ENCODE measurements at regions of chr10 and their contacts with region 1.

Region 1: DNA sequence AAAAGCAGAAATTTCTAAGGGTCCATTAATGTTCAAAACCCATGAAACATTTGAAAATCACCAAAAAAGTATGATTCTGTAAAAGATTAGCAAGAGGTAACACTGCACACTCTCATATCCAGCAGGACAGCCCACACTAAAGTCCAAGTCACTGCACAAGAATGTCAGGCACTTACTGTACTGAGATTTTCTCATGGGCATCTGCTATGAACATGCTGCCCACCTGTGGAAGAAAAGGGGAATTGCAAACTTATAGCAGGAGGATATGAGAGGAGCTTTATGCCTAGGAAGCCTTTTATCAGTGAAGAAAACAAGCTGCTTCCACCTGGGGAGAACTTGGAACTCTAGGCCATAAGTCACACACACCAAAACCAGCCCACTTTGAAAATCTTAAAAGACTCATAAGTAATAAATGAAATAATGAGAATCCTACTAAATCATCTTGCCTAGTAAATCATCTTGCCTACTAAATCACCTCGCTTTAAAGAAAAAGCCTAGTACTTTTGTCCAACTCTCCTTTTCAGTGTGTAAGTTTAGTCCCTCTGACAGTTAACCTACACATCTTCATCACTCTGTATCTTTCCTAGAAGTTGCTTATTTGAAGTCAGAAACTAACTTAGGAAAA is 46.1 kb downstream of the ARMH3 start:
- DNase-seq: no peak
- ATAC-seq: peak; percentile 97 to 99 (median 98)
- H3K4me3 ChIP-seq: no peak overlapping the region
- H3K27ac ChIP-seq: no peak overlapping the region
- H3K4me1 ChIP-seq: peaks cover 5% of the 10 kb centered on the region
- H3K27me3 ChIP-seq: no peaks in the 10 kb centered on the region
- CTCF ChIP-seq: peak; percentile 91

Region 2: GRCh38 chr10:101840741-101841453 is 169.0 kb before region 1 on chr10:
- intact Hi-C with region 1: loop called (anchors 2 to 5 kb)
- DNase-seq: peak; percentile 81 to 87
- ATAC-seq: peak; percentile 86 to 92 (median 87)
- H3K4me3 ChIP-seq: peak overlapping the region; percentile 53
- H3K27ac ChIP-seq: no peak overlapping the region
- H3K4me1 ChIP-seq: peaks cover 24% of the 10 kb centered on the region
- H3K27me3 ChIP-seq: no peaks in the 10 kb centered on the region
- CTCF ChIP-seq: peak; percentile 86

Region 3: DNA sequence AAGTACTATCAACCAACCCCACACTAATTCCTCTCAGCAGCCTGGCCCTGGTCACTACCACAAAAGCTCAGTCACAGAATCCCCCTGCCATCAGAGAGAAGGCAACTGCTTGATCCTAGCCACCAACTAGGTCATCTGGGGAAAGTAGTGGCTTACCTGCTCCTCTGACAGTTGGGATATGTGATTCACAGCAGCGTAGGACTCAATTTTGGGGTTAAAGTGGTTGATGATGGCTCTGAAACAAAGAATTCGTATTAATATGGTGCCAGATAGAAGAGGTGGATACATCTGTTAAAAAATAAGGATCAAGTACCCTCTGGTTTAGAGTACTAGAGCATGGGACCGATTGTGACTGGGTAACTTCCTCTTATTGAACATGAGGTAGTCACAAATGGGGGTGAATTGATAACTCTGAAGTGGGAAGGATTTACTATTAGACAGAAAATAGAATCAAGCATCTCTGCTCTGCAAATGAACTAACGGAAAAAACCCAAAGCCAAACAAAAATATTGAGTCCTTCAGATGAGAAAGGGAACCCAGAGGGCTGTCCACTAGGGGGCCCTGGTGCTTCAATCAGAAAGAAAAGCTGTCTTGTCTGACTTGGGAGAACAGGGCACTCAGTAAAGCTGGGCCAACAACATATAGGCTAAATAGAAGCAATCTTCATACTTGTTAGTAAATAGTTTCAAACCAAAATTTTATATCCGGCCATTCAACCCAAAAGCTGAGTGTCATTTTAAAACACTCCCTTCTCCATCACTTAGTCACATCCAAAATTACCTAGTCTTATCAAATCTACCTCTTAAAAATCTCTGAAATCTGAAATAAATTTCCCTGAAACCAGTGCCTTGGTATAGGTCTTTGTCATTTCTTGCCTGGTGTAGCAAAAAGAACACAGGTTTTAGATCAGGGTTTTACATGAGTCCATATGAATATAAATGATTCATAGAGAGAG is 120.4 kb before region 1 on chr10:
- intact Hi-C with region 1: loop called (anchors 2 kb)
- DNase-seq: peak; percentile 67 to 79
- ATAC-seq: peak; percentile 58 to 85 (median 78)
- H3K4me3 ChIP-seq: no peak overlapping the region
- H3K27ac ChIP-seq: no peak overlapping the region
- H3K4me1 ChIP-seq: peaks cover 9% of the 10 kb centered on the region
- H3K27me3 ChIP-seq: no peaks in the 10 kb centered on the region
- CTCF ChIP-seq: peak; percentile 75

Region 4: GRCh38 chr10:101986625-101986973 is 23.3 kb before region 1 on chr10:
- intact Hi-C with region 1: no loop called
- DNase-seq: no peak
- ATAC-seq: no peak
- H3K4me3 ChIP-seq: no peak overlapping the region
- H3K27ac ChIP-seq: no peak overlapping the region
- H3K4me1 ChIP-seq: no peaks in the 10 kb centered on the region
- H3K27me3 ChIP-seq: no peaks in the 10 kb centered on the region
- CTCF ChIP-seq: no peak

Region 5: GRCh38 chr10:102208311-102209035 is 198.6 kb after region 1 on chr10:
- intact Hi-C with region 1: no loop called
- DNase-seq: no peak
- ATAC-seq: no peak
- H3K4me3 ChIP-seq: no peak overlapping the region
- H3K27ac ChIP-seq: no peak overlapping the region
- H3K4me1 ChIP-seq: no peaks in the 10 kb centered on the region
- H3K27me3 ChIP-seq: no peaks in the 10 kb centered on the region
- CTCF ChIP-seq: no peak

Region 6: GRCh38 chr10:102546606-102547320 is 536.9 kb after region 1 on chr10:
- intact Hi-C with region 1: no loop called
- DNase-seq: no peak
- ATAC-seq: no peak
- H3K4me3 ChIP-seq: no peak overlapping the region
- H3K27ac ChIP-seq: no peak overlapping the region
- H3K4me1 ChIP-seq: peaks cover 18% of the 10 kb centered on the region
- H3K27me3 ChIP-seq: no peaks in the 10 kb centered on the region
- CTCF ChIP-seq: no peak

Measured in psoas muscle (tissue), 8 donors.